Right ventricle myocardium inferior (tissue), 1 donor: ENCODE measurements at regions of chr14 and their contacts with region 1.

Region 1: DNA sequence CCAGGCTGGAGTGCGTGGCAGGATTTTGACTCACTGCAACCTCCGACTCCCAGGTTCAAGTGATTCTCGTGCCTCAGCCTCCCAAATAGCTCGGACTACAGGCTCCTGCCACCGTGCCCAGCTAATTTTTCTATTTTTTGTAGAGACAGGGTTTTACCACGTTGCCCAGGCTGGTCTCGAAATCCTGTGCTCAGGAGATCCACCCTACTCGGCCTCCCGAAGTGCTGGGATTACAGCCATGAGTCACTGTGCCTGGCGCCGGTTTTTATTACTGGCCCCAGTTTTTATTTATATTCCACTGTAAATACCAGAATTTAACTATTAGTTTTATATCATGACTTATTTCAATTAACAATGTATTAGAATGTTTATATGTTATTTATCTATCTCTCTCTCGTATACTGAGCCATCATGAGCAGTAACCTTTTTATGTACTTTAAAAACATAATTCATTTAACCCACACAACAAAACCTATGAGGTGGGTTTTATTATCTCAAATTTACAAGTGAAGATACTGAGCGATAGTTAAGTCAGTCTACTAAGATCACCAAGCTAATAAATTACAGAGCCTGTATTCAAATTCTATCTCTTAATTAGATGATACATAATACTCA is 47.8 kb downstream of the HECTD1 start:
- DNase-seq: no peak
- ATAC-seq: no peak

Region 2: DNA sequence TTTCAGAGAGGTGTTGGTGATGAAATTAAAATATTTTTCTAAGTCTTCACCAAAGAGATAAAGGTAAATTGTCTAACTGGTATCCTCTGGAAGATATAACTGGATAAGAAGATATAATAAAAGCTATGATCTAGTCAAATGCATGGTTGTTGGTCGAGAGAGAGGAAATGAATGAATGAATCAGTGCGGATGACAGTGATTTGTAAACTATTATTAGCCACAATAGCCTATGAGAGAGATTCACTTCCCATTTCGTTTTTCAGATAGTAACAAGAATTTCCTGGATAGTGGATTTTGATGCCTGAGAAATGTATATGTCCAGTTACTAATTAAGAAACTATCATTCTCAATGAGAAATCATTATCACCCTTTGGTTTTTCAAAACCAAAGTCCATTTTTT is 197.5 kb after region 1 on chr14:
- intact Hi-C with region 1: loop called (anchors 10 kb)
- DNase-seq: no peak
- ATAC-seq: no peak